ENCODE measurements at regions of chr6 and their contacts with region 1.

Region 1: GRCh38 chr6:43491750-43492661 is 14.6 kb downstream of the TJAP1 start:
- DNase-seq: peak in 3 of 4 donors; percentile 60 to 89 (median 67)
- ATAC-seq: peak; percentile 85
- H3K4me3 ChIP-seq: no peak overlapping the region
- H3K27ac ChIP-seq: peak overlapping the region in 1 of 2 donors; percentile 2
- H3K4me1 ChIP-seq: peaks cover 12 to 36% of the 10 kb centered on the region in 2 donors
- H3K27me3 ChIP-seq: no peaks in the 10 kb centered on the region
- CTCF ChIP-seq: no peak

Region 2: DNA sequence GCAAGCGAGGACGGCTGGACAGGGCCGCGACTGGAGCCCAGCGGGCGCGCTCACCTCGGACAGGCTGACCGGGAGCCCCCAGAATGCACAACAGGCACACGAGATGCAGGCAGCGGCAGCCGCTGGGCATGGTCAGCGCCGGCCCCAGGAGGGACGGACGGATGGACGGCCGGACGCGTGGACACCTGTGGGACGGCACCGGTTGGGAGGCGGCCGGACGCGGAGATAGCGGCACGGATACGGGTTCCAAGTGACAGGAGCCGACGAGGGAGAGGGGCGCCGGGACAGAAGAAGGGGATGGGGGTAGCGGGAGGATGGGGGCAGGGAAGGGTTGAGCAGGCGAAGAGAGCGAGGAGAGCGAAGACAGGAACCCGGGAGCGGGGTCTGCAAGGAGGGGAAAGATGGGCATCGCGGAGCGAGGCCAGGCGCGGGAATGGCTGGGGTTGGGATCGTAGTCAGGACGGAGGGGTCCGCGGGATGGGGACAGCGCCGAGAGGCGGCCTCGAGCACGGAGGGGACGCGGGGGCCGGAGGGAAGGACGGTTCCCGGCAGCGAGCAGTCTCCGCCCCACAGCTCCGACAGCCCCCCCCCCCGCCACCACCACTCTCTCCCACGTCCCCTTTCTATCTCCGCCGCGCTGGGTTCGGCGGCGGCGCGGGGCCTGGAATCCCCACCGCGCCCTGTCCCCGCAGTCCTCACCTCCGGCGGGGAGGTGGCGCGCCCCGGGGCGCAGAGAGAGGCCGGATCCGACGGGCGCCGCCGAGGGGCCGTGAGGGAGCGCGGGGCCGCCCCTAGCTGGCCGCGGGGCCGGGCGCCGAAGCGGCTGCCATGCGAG is 37.1 kb before region 1 on chr6:
- intact Hi-C with region 1: loop called in 1 of 2 experiments (anchors 5 kb)
- DNase-seq: peak; percentile 60 to 98 (median 81)
- ATAC-seq: peak; percentile 97
- H3K4me3 ChIP-seq: peak overlapping the region; percentile 42 to 54
- H3K27ac ChIP-seq: no peak overlapping the region
- H3K4me1 ChIP-seq: peaks cover 0 to 21% of the 10 kb centered on the region in 2 donors
- H3K27me3 ChIP-seq: peaks cover 13 to 58% of the 10 kb centered on the region in 2 donors
- CTCF ChIP-seq: no peak

Measured in left lung (tissue), 14 donors.